MCF 10A (cell line): ENCODE measurements at regions of chr2 and their contacts with region 1.

Region 1: GRCh38 chr2:101396316-101396717 is 9.0 kb upstream of the CREG2 start:
- DNase-seq: peak; percentile 81
- H3K4me3 Mint-ChIP-seq: peak overlapping the region; percentile 26
- H3K27ac Mint-ChIP-seq: peak overlapping the region; percentile 88
- H3K4me1 Mint-ChIP-seq: peaks cover 23% of the 10 kb centered on the region
- H3K27me3 Mint-ChIP-seq: no peaks in the 10 kb centered on the region
- CTCF ChIP-seq: no peak

Region 2: GRCh38 chr2:101341901-101342624 is 54.3 kb before region 1 on chr2:
- CTCF ChIA-PET with region 1: interaction called, 19 read pairs
- POLR2A ChIA-PET with region 1: interaction called, 3 read pairs
- intact Hi-C with region 1: no loop called
- DNase-seq: peak; percentile 78
- H3K4me3 Mint-ChIP-seq: no peak overlapping the region
- H3K27ac Mint-ChIP-seq: no peak overlapping the region
- H3K4me1 Mint-ChIP-seq: peaks cover 5% of the 10 kb centered on the region
- H3K27me3 Mint-ChIP-seq: no peaks in the 10 kb centered on the region
- CTCF ChIP-seq: peak; percentile 78

Region 3: DNA sequence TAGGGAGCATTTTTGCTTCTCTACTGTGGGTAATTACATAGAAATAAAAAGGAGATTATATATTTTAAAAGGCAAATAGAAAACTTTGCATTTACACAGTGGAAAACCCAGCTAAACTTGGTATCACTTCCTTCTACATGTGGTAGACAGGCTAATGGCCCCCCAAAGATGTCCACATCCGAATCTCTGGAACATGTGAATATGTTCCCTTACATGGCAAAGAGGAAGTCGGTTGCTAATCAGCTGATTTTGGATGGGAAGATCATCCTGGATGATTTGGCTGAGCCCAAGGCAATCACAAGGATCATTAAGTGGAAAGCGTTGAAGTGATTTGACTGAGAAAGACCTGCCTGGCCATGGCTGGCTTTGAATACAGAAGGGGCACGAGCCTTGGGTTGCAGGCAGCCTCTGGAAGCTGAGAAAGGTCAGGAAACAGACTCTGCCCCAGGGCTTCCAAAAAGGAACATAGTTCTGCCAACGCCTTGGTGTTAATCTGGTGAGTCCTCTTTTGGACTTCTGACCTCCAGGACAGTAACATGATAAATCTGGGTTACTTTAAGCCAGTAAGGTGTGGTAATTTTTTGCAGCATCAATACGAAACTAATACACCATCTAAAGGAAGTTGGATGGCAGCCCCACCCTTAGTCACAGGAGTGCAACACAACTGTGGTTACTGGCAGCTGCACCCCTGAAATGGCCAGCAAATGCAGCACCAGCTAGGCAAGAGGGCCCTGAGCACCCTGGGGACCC is 35.0 kb before region 1 on chr2:
- CTCF ChIA-PET with region 1: interaction called, 3 read pairs
- POLR2A ChIA-PET with region 1: interaction called, 15 read pairs
- intact Hi-C with region 1: no loop called
- DNase-seq: peak; percentile 26
- H3K4me3 Mint-ChIP-seq: no peak overlapping the region
- H3K27ac Mint-ChIP-seq: no peak overlapping the region
- H3K4me1 Mint-ChIP-seq: peaks cover 34% of the 10 kb centered on the region
- H3K27me3 Mint-ChIP-seq: no peaks in the 10 kb centered on the region
- CTCF ChIP-seq: no peak

Region 4: DNA sequence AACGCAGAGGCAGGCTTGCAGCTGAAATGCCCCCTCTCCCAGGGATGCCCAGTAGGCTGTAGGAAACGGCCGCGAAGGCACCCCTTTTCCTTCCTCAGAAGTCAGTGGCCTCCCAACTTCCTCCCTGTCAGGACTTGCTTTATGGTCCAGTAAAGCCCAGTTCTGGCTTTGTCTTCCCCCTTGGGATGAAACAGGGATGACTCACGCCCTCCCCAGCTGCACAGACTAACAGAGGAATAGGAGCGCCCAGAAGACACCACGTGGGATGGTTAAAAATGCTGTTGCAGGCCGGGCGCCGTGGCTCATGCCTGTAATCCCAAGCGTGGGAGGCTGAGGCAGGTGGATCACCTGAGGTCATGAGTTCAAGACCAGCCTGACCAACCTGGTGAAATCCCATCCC is 15.9 kb before region 1 on chr2:
- CTCF ChIA-PET with region 1: interaction called, 11 read pairs
- POLR2A ChIA-PET with region 1: interaction called, 8 read pairs
- intact Hi-C with region 1: no loop called
- DNase-seq: peak; percentile 94
- H3K4me3 Mint-ChIP-seq: no peak overlapping the region
- H3K27ac Mint-ChIP-seq: no peak overlapping the region
- H3K4me1 Mint-ChIP-seq: peaks cover 9% of the 10 kb centered on the region
- H3K27me3 Mint-ChIP-seq: no peaks in the 10 kb centered on the region
- CTCF ChIP-seq: no peak